Lower leg skin (tissue), 4 donors: ENCODE measurements at regions of chr6 and their contacts with region 1.

Region 1: GRCh38 chr6:144922120-144922722 is 637.1 kb downstream of the UTRN start:
- DNase-seq: peak in 1 of 2 donors; percentile 19
- H3K4me3 ChIP-seq: no peak overlapping the region
- CTCF ChIP-seq: no peak
- POLR2A ChIP-seq: no peak

Region 2: DNA sequence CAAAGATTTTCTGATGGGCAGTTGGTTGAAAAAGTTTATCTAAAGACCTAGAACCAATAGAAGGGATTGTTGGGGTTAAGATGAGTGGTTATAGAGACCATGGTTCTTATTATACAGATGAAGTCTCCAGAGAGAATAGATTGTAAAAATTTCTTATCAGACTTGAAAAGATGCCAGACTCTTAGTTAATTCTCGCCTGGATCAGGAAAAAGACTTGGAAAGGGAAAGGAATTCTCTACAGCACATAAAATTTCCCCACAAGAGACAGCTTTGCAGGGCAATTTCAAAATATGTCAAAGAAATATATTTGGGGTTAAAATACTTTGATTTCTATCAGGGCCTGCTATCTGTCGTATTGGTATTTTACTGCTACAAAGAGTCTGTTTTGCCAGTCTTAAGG is 54.5 kb before region 1 on chr6:
- intact Hi-C with region 1: no loop called
- DNase-seq: no peak
- H3K4me3 ChIP-seq: no peak overlapping the region
- CTCF ChIP-seq: no peak
- POLR2A ChIP-seq: no peak

Region 3: GRCh38 chr6:146009338-146009737 is 1087.1 kb after region 1 on chr6:
- intact Hi-C with region 1: loop called (anchors 5 kb)
- DNase-seq: no peak
- H3K4me3 ChIP-seq: no peak overlapping the region
- CTCF ChIP-seq: no peak
- POLR2A ChIP-seq: no peak